IMR-90 (cell line): ENCODE measurements at regions of chr4 and their contacts with region 1.

Region 1: GRCh38 chr4:68797618-68798017 is 18.2 kb upstream of the UGT2B10 start:
- DNase-seq: no peak
- ATAC-seq: no peak
- H3K4me3 ChIP-seq: no peak overlapping the region
- H3K27ac ChIP-seq: no peak overlapping the region
- H3K4me1 ChIP-seq: no peaks in the 10 kb centered on the region
- H3K27me3 ChIP-seq: no peaks in the 10 kb centered on the region
- CTCF ChIP-seq: no peak
- POLR2A ChIP-seq: no peak
- RAD21 ChIP-seq: no peak

Region 2: DNA sequence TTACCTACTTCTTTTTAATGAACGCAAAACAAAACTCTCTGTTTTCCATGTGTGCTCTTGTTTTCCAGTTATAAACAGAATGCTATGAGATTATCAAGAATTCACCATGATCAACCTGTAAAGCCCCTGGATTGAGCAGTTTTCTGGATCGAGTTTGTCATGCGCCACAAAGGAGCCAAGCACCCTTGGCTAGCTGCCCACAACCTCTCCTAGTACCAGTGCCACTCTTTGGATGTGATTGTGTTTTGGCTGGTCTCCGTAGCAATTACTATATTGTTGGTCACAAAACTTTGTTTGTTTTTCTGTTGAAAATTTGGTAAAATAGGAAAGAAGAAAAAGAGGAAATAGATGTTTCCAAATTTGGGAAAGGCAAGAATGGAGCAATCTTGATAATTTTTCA is 349.7 kb after region 1 on chr4:
- CTCF ChIA-PET with region 1: no interaction called
- POLR2A ChIA-PET with region 1: no interaction called
- dilution Hi-C with region 1: no loop called
- in situ Hi-C with region 1: no loop called
- intact Hi-C with region 1: loop called (anchors 10 kb)
- DNase-seq: no peak
- ATAC-seq: no peak
- H3K4me3 ChIP-seq: no peak overlapping the region
- H3K27ac ChIP-seq: no peak overlapping the region
- H3K4me1 ChIP-seq: no peaks in the 10 kb centered on the region
- H3K27me3 ChIP-seq: no peaks in the 10 kb centered on the region
- CTCF ChIP-seq: no peak
- POLR2A ChIP-seq: no peak
- RAD21 ChIP-seq: no peak